ENCODE measurements at regions of chr1 and their contacts with region 1.

Region 1: DNA sequence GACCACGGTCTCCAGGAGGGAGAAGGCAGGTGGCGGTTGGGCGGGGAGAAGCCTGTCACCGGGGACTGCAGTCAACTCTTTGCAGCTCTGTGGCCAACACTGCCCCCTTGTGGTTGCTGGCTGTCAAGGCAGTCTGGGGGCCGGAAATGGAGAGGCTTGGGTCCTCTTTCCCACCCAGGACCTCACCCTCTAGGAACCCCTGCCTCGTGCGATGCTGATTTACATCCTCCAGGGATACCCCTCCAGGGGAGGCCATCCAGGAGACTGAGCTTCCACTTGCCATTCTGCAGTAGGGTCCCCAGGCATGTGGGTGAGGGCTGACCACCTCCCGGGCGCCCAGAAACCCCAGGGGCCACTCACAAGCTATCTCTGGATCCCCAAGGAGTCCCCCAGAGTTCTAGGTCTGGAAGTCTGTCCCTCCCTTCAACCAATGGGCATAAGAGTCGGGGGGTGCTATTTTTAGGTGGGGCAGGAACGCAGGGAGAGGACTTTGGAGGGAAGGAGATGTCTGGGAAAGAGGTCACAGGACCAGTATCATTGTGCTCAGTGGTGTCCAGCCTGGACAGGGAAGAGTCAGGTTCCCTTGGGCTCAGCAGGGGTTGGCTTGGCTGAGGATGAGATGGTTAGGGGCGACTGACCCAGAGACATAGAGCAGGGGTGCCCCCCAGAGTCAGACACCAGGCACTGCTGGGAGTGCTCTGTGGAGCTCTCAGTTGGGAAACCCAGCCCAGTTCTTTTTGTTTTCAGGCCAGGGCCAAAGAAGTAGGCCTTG is 7.1 kb upstream of the GPR61 start:
- DNase-seq: peak; percentile 96
- ATAC-seq: peak; percentile 91
- H3K4me3 Mint-ChIP-seq: peak overlapping the region; percentile 38; the same call in 1 of the 2 replicates
- H3K27ac Mint-ChIP-seq: peak overlapping the region; percentile 8; the same call in 1 of the 2 replicates
- H3K4me1 Mint-ChIP-seq: peaks cover 10% of the 10 kb centered on the region
- H3K27me3 Mint-ChIP-seq: peaks cover 8% of the 10 kb centered on the region
- CTCF ChIP-seq: peak; percentile 97

Region 2: DNA sequence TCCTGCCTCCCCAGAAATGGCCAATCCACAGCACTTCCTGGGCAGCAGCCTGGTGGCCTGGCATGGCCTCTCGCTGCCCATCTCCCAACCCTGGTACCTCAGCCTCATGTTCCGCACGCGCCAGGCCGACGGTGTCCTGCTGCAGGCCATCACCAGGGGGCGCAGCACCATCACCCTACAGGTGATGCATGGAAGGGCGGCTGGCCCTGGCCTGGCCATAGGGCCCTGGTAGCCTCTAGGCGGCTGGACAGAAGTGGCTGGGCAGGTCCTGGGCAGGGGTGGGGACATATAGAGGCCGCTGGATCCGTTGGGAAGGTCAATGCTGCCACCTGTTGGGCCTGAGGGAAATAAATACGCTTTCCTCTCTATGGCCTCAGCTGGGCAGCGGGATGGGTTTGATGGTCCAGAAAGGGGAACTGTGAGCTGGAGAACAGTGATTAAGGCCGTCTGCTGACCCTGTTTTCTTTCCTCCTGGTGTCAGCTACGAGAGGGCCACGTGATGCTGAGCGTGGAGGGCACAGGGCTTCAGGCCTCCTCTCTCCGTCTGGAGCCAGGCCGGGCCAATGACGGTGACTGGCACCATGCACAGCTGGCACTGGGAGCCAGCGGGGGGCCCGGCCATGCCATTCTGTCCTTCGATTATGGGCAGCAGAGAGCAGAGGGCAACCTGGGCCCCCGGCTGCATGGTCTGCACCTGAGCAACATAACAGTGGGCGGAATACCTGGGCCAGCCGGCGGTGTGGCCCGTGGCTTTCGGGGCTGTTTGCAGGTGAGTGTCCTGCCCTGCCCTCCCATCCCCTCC is 268.8 kb before region 1 on chr1:
- CTCF ChIA-PET with region 1: interaction called, 17 read pairs
- POLR2A ChIA-PET with region 1: interaction called, 3 read pairs
- DNase-seq: peak; percentile 96
- ATAC-seq: peak; percentile 93
- H3K4me3 Mint-ChIP-seq: no peak overlapping the region
- H3K27ac Mint-ChIP-seq: no peak overlapping the region
- H3K4me1 Mint-ChIP-seq: peaks cover 21% of the 10 kb centered on the region
- H3K27me3 Mint-ChIP-seq: no peaks in the 10 kb centered on the region
- CTCF ChIP-seq: peak; percentile 97

Region 3: GRCh38 chr1:109397538-109398342 is 134.8 kb before region 1 on chr1 and contains the start of gene SORT1:
- CTCF ChIA-PET with region 1: interaction called, 21 read pairs
- POLR2A ChIA-PET with region 1: no interaction called
- DNase-seq: peak; percentile 97
- ATAC-seq: peak; percentile 99
- H3K4me3 Mint-ChIP-seq: peak within 1 kb of the TSS; percentile 95
- H3K27ac Mint-ChIP-seq: peak within 1 kb of the TSS; percentile 97
- H3K4me1 Mint-ChIP-seq: peaks cover 43% of the 10 kb centered on the region
- H3K27me3 Mint-ChIP-seq: no peaks in the 10 kb centered on the region
- CTCF ChIP-seq: no peak
- total RNA-seq, gene SORT1: 50.2 to 60.8 TPM (median 55.9 TPM) in 3 replicates

Region 4: GRCh38 chr1:109446085-109446695 is 86.4 kb before region 1 on chr1:
- CTCF ChIA-PET with region 1: no interaction called
- POLR2A ChIA-PET with region 1: no interaction called
- DNase-seq: no peak
- ATAC-seq: no peak
- H3K4me3 Mint-ChIP-seq: no peak overlapping the region
- H3K27ac Mint-ChIP-seq: no peak overlapping the region
- H3K4me1 Mint-ChIP-seq: no peaks in the 10 kb centered on the region
- H3K27me3 Mint-ChIP-seq: peaks cover 18% of the 10 kb centered on the region
- CTCF ChIP-seq: no peak

Region 5: DNA sequence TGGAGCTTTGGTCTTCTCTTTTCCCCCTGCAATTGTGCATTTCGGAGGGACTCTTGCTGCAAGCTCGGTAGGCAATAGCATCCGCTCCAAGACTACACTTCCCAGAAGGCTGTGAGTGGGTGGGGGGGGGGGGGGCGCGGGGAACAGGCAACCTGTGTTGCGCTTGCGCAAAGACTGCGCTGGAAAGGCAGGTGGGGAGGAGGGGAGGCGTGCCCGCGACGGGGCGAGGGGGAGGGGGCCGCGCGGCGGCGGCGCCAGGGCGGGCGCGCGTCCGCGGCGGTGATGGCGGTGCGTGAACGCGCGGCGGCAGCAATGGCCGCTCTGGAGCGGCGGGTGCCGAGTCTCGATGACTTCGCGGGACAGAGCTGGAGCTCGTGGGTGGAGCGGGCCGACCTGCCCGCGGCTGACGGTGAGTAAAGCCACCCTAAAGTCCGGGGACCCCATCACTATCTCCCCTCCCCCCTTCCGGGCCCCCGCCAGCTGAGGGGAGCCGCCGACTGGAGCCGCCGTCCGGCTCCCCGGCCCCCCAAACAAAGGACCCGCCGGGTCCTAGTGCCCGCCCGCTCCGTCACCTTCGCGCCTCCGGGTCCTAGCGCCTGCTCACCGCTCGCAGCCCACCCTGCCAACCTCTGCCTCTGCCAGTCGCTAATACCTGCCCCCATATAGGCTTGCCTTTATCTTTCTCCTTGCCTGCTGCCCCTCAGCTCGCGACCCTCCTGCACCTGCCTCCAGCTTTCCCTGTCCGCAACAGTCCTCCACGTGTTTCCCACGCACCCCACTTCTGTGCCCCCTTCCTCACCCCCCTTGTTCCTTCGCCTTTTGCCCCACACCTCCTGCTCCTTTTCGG is 48.7 kb before region 1 on chr1 and contains the start of gene ATXN7L2:
- CTCF ChIA-PET with region 1: interaction called, 740 read pairs
- POLR2A ChIA-PET with region 1: no interaction called
- DNase-seq: peak; percentile 91
- ATAC-seq: peak; percentile 61
- H3K4me3 Mint-ChIP-seq: peak within 1 kb of the TSS; percentile 85
- H3K27ac Mint-ChIP-seq: peak within 1 kb of the TSS; percentile 89
- H3K4me1 Mint-ChIP-seq: peaks cover 30% of the 10 kb centered on the region
- H3K27me3 Mint-ChIP-seq: no peaks in the 10 kb centered on the region; the same call in none of the 2 replicates
- CTCF ChIP-seq: no peak
- total RNA-seq, gene ATXN7L2: 8.9 to 11.1 TPM (median 10.9 TPM) in 3 replicates

Region 6: DNA sequence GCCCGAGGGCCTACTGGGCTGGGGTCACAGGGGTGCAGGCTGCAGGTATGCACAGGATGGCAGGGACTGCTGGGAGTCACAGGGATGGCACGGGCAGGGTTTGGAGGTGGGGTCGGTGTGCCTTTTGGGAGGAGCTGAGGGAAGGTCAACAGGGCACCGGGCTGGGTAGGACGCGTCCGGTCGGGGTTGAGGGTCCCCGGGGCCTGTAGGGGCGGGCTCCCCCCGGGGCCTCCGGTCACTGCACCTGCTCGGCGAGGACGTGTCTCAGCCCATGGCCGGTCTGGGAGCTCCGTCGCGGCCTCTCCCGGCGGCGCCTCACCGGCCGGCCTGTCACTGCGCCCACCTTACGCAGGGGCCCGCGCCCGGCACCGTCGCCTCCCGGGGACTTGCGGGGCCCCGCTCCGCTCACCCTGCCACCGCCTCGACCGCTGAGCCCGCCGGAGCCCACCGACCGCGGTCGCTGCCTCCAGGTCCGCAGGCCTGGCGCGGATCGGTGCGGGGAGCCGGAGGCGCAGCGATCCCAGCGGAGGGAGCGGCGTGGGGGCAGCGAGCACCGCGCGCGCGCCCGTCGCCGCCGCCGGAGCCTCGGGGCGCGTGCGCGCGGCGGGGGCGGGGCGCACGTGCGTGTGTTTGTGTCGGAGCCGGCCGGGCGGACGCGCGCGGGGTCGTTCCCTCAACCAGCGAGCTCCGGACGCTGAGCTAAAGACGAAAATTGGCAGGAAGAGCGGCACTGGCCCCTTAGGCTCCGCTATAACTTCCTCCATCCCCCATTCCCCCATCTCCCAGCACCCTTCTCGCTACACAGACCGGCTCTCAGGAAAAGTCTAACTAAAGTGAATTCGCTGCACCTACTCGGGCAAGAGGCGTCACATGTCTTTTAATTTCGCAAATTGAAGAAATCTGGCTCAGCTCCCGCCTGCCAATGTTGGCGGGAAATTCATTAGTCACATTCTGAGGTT is 23.1 kb before region 1 on chr1 and contains the start of gene AMIGO1:
- CTCF ChIA-PET with region 1: interaction called, 128 read pairs
- POLR2A ChIA-PET with region 1: interaction called, 5 read pairs
- DNase-seq: peak; percentile 70
- ATAC-seq: peak; percentile 74
- H3K4me3 Mint-ChIP-seq: peak within 1 kb of the TSS; percentile 89
- H3K27ac Mint-ChIP-seq: no peak within 1 kb of the TSS
- H3K4me1 Mint-ChIP-seq: peaks cover 16% of the 10 kb centered on the region
- H3K27me3 Mint-ChIP-seq: peaks cover 54% of the 10 kb centered on the region
- CTCF ChIP-seq: no peak
- total RNA-seq, gene AMIGO1: 2.4 to 3.0 TPM (median 3.0 TPM) in 3 replicates

Region 7: GRCh38 chr1:109564194-109564878 is 31.8 kb after region 1 on chr1:
- CTCF ChIA-PET with region 1: interaction called, 11 read pairs
- POLR2A ChIA-PET with region 1: no interaction called
- DNase-seq: no peak
- ATAC-seq: peak; percentile 43
- H3K4me3 Mint-ChIP-seq: peak overlapping the region; percentile 46
- H3K27ac Mint-ChIP-seq: peak overlapping the region; percentile 94
- H3K4me1 Mint-ChIP-seq: peaks cover 51% of the 10 kb centered on the region
- H3K27me3 Mint-ChIP-seq: no peaks in the 10 kb centered on the region
- CTCF ChIP-seq: no peak

Region 8: DNA sequence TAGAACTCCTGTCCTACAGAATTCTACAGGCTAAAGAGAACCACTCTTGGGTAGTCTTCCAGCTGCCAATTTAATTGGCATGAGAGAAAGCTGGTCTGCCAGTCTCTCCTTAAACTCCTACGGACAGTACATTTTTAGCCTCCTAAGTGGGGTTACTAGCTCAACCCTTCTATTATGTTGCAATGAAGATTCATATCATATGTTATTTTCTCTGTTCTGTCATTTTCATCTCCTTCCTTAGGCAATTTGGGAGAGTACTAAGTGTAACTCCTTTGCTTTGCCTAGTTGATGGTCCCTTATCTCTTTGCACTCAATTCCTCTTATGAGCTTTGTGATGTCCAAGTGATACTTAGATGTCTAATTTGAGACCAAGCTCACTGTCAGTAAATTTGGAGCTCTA is 72.8 kb after region 1 on chr1:
- CTCF ChIA-PET with region 1: no interaction called
- POLR2A ChIA-PET with region 1: no interaction called
- DNase-seq: no peak
- ATAC-seq: no peak
- H3K4me3 Mint-ChIP-seq: no peak overlapping the region
- H3K27ac Mint-ChIP-seq: no peak overlapping the region
- H3K4me1 Mint-ChIP-seq: peaks cover 19% of the 10 kb centered on the region
- H3K27me3 Mint-ChIP-seq: no peaks in the 10 kb centered on the region
- CTCF ChIP-seq: no peak